Vagina (tissue), 2 donors: ENCODE measurements at regions of chr7 and their contacts with region 1.

Region 1: DNA sequence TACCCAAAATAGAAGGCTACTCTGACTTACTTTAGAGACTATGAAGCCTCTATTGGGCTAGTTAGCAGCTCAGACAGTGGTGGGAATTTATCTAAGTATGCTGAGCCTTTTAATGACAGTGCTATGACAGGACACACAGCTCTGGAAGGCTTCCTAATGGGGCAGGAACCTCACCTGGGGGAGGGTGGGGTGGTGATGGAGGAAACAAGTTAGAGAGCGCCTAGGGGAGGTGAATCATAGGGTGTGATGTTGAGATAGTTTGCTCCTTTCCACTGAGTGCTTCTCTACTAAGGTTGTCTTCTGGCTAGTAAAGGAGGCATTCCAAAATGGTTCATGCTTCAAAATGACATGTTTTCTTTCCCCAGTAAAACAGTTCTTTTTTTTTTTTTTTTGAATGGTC is 42.1 kb downstream of the PPP1R9A start:
- DNase-seq: no peak
- H3K4me3 ChIP-seq: no peak overlapping the region
- H3K27ac ChIP-seq: no peak overlapping the region
- H3K4me1 ChIP-seq: no peaks in the 10 kb centered on the region
- H3K27me3 ChIP-seq: no peaks in the 10 kb centered on the region
- CTCF ChIP-seq: no peak
- POLR2A ChIP-seq: no peak

Region 2: GRCh38 chr7:94972296-94972695 is 22.8 kb after region 1 on chr7:
- intact Hi-C with region 1: loop called (anchors 1 kb)
- DNase-seq: no peak
- H3K4me3 ChIP-seq: no peak overlapping the region
- H3K27ac ChIP-seq: no peak overlapping the region
- H3K4me1 ChIP-seq: no peaks in the 10 kb centered on the region
- H3K27me3 ChIP-seq: no peaks in the 10 kb centered on the region
- CTCF ChIP-seq: no peak
- POLR2A ChIP-seq: no peak